ENCODE measurements at regions of chr18 and their contacts with region 1.

Region 1: GRCh38 chr18:45802608-45803492 is 22.6 kb upstream of the SIGLEC15 start:
- DNase-seq: peak; percentile 68 to 87
- ATAC-seq: peak; percentile 98 to 99
- H3K4me3 ChIP-seq: no peak overlapping the region
- H3K27ac ChIP-seq: peak overlapping the region; percentile 71 to 93
- H3K4me1 ChIP-seq: peaks cover 19% of the 10 kb centered on the region
- CTCF ChIP-seq: no peak
- EP300 ChIP-seq: peak; percentile 30 to 47; a peak in 2 of 5 replicates
- POLR2A ChIP-seq: no peak
- RAD21 ChIP-seq: peak in 1 of 2 experiments; percentile 4; a peak in 1 of 5 replicates

Region 2: GRCh38 chr18:45775241-45775676 is 27.6 kb before region 1 on chr18:
- CTCF ChIA-PET with region 1: interaction called, 3 read pairs
- POLR2A ChIA-PET with region 1: interaction called, 10 read pairs
- DNase-seq: peak; percentile 43 to 85
- ATAC-seq: peak; percentile 83 to 95
- H3K4me3 ChIP-seq: peak overlapping the region; percentile 62
- H3K27ac ChIP-seq: peak overlapping the region; percentile 79 to 95
- H3K4me1 ChIP-seq: no peaks in the 10 kb centered on the region; the same call in 2 of the 3 replicates
- CTCF ChIP-seq: no peak
- EP300 ChIP-seq: no peak
- POLR2A ChIP-seq: peak; percentile 54
- RAD21 ChIP-seq: no peak